Ascending aorta (tissue), 2 donors: ENCODE measurements at regions of chr17 and their contacts with region 1.

Region 1: GRCh38 chr17:74176546-74177001 is 26.9 kb upstream of the RPL38 start:
- DNase-seq: no peak
- H3K4me3 ChIP-seq: no peak overlapping the region
- H3K27ac ChIP-seq: no peak overlapping the region
- H3K4me1 ChIP-seq: no peaks in the 10 kb centered on the region
- H3K27me3 ChIP-seq: no peaks in the 10 kb centered on the region
- CTCF ChIP-seq: peak; percentile 46 to 83 (median 65)

Region 2: DNA sequence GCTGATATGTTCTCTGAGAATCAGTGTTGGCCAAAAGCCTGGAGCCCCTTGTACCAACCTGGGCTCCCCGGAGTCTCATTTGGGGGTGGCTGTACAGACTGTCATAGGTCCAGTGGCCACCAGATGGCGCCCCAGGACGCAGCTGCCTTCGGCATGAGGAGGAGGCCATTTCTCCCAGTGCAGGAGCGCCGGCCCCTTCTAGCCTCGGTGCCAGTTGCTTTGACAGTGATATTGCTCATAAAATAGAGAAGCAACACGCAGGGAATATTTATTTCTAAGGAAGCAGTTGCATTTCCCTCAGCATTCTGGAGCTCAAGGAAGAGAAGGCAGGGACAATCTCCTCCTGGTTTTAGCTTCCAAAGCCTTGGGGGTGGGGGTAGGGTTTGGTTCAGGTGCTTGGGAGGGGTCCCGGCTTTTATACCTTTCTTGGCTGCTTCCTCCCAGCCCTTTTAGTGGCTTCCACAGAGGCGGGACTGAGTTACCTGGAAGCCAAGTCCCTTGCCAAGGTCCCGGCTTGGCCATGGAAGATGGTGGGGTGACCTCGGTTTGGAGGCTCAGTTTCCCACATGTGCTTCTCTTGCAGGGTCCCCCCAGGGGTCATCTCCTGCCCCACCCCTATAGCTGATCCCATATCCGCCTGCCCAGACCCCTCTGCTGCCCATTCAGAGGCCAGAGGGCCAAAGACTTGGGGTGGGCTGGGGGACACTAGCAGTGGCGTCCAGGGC is 747.0 kb before region 1 on chr17:
- intact Hi-C with region 1: loop called (anchors 1 kb)
- DNase-seq: peak; percentile 26 to 87
- H3K4me3 ChIP-seq: no peak overlapping the region
- H3K27ac ChIP-seq: no peak overlapping the region
- H3K4me1 ChIP-seq: no peaks in the 10 kb centered on the region
- H3K27me3 ChIP-seq: no peaks in the 10 kb centered on the region
- CTCF ChIP-seq: peak; percentile 81 to 98 (median 95)

Region 3: DNA sequence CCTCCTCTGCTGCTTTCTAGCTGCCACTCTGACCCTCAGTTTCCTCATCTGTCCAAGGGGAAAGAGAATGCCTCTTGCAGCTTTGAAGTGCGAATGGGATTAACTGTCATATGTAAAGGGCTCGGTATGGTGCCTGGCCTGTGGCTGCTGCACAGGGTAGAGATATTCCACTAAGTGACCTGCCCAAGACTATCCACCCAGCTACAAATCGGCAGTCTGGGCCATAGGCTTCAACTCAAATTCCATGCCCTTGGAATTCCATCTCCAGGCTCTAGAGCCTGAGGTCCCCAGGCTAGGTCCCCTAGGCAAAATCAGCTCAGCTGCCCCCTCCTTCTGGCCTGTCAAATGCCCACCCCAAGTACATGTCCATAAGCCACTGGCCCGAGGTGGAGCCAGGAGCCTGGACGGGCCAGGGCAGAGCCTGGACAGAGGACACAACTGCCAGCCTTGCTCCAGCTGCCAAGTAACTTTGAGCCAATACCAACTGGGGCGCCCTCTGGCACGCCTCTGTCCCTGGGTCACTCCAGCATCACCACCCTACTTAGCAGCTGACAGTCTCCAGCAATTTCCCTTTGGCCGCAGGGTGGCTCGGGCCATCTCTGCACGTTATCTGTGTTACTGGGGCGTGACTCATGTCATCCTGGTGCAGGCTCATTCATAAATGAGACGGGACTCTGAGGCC is 589.5 kb before region 1 on chr17:
- intact Hi-C with region 1: loop called (anchors 5 kb)
- DNase-seq: no peak
- H3K4me3 ChIP-seq: no peak overlapping the region
- H3K27ac ChIP-seq: no peak overlapping the region
- H3K4me1 ChIP-seq: no peaks in the 10 kb centered on the region
- H3K27me3 ChIP-seq: no peaks in the 10 kb centered on the region
- CTCF ChIP-seq: no peak

Region 4: DNA sequence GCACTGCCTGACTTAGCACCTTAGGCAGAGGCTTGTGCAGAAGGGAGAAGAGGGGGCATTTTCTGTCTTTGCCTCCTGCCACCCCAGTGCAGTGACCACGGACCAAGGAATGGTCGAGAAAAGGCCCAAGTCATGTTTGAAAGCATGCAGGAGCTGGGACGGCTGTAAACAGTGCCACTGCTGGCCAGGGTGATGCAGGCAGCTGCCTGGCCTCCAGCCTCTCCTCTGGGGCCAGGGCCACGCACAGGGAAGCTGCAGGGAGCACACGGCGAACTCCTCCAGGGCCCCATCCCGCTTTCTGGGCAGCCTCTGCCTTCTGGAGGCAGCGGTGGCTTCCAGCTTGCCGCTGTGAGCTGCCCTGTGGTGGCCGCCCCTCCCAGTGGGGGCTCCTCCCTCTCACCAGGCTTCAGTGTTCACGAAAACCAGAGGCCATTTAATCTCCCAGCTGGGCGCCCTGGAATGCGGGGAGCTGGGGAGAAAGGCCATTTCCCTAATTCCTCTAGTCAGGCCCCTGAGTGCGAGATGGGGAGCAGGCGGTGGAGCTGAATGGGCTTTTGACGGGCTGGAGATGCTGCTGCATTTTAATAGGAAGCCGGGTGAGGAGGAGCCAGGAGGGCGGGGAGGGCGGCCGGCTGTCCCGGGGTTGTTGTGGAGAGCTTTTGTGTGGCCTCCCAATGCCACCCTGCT is 68.7 kb after region 1 on chr17:
- intact Hi-C with region 1: no loop called
- DNase-seq: no peak
- H3K4me3 ChIP-seq: no peak overlapping the region
- H3K27ac ChIP-seq: no peak overlapping the region
- H3K4me1 ChIP-seq: no peaks in the 10 kb centered on the region
- H3K27me3 ChIP-seq: no peaks in the 10 kb centered on the region
- CTCF ChIP-seq: no peak

Region 5: DNA sequence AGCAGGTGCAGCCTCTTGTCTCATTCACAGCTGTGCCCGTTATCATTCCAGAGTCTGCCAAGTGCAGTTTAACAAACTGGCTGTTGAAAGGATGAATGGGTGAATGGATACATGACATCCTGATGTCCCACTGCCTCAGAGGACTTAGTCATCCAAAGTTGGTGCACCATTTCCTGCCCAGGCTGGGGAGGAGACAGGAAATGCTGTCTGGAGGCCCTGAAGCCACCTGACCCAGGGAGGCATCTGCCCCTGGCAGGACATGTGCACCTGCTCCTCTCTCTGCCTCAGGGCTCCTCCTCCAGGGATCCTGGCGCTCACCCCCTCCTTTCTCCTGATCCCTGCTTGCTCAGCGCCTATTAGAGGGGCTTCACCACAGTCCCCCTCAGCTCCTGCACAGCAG is 371.2 kb after region 1 on chr17:
- intact Hi-C with region 1: no loop called
- DNase-seq: no peak
- H3K4me3 ChIP-seq: no peak overlapping the region
- H3K27ac ChIP-seq: no peak overlapping the region
- H3K4me1 ChIP-seq: no peaks in the 10 kb centered on the region
- H3K27me3 ChIP-seq: no peaks in the 10 kb centered on the region
- CTCF ChIP-seq: no peak